MCF 10A (cell line): ENCODE measurements at regions of chr19 and their contacts with region 1.

Region 1: GRCh38 chr19:47663841-47664771 is 49.1 kb upstream of the EHD2 start:
- DNase-seq: peak; percentile 99
- H3K4me3 Mint-ChIP-seq: peak overlapping the region; percentile 52
- H3K27ac Mint-ChIP-seq: peak overlapping the region; percentile 81
- H3K4me1 Mint-ChIP-seq: peaks cover 49% of the 10 kb centered on the region
- H3K27me3 Mint-ChIP-seq: no peaks in the 10 kb centered on the region
- CTCF ChIP-seq: no peak

Region 2: GRCh38 chr19:47483800-47484690 is 180.1 kb before region 1 on chr19 and contains the start of gene KPTN:
- CTCF ChIA-PET with region 1: interaction called, 3 read pairs
- POLR2A ChIA-PET with region 1: interaction called, 10 read pairs
- intact Hi-C with region 1: no loop called
- DNase-seq: peak; percentile 87
- H3K4me3 Mint-ChIP-seq: peak within 1 kb of the TSS; percentile 99
- H3K27ac Mint-ChIP-seq: peak within 1 kb of the TSS; percentile 99
- H3K4me1 Mint-ChIP-seq: peaks cover 5% of the 10 kb centered on the region
- H3K27me3 Mint-ChIP-seq: no peaks in the 10 kb centered on the region
- CTCF ChIP-seq: peak; percentile 99
- total RNA-seq, gene KPTN: 9.7 and 17.6 TPM in 2 replicates

Region 3: GRCh38 chr19:47514869-47515588 is 149.1 kb before region 1 on chr19 and contains the start of gene NAPA:
- CTCF ChIA-PET with region 1: interaction called, 11 read pairs
- POLR2A ChIA-PET with region 1: interaction called, 46 read pairs
- intact Hi-C with region 1: loop called (anchors 10 kb)
- DNase-seq: peak; percentile 100
- H3K4me3 Mint-ChIP-seq: peak within 1 kb of the TSS; percentile 99
- H3K27ac Mint-ChIP-seq: peak within 1 kb of the TSS; percentile 100
- H3K4me1 Mint-ChIP-seq: peaks cover 39% of the 10 kb centered on the region
- H3K27me3 Mint-ChIP-seq: no peaks in the 10 kb centered on the region
- CTCF ChIP-seq: no peak
- total RNA-seq, gene NAPA: 72.1 and 73.2 TPM in 2 replicates

Region 4: GRCh38 chr19:47608074-47608918 is 55.8 kb before region 1 on chr19:
- CTCF ChIA-PET with region 1: interaction called, 18 read pairs
- POLR2A ChIA-PET with region 1: interaction called, 54 read pairs
- intact Hi-C with region 1: loop called (anchors 1 kb)
- DNase-seq: peak; percentile 96
- H3K4me3 Mint-ChIP-seq: peak overlapping the region; percentile 84
- H3K27ac Mint-ChIP-seq: peak overlapping the region; percentile 75
- H3K4me1 Mint-ChIP-seq: peaks cover 15% of the 10 kb centered on the region
- H3K27me3 Mint-ChIP-seq: no peaks in the 10 kb centered on the region
- CTCF ChIP-seq: no peak

Region 5: DNA sequence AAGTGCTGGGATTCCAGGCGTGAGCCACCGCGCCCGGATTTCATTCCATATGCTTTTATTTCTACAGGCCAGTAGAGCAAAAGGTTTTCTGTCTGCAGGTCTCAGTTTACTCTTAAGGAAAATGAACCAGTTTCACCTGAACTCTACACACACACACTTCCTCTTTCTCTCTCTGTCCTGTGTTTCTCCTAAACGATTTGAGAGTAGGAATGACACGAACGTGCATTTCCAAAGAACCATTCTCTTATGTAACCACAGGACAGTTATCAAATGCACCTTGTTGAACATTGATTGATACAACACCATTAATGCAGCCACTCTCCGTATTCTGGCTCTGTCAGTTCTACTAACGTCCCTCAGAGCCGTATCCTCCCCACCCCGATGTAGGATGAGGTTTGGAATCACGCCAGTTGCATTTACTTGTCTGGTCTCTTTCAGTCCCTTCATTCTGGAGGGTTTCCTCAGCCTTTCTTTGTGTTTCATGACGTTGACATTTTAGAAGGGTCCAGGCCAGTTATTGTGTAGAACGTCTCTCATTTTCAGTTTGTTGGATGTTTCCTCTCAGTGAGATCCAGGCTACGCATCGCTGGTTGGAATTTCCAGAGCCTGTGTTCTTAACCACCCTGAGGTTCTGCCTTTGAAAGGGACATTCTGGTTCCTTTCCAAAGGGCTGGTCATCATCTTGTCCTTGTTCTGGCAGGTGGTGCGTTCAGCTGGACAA is 19.2 kb before region 1 on chr19:
- CTCF ChIA-PET with region 1: no interaction called
- POLR2A ChIA-PET with region 1: interaction called, 15 read pairs
- intact Hi-C with region 1: no loop called
- DNase-seq: no peak
- H3K4me3 Mint-ChIP-seq: no peak overlapping the region
- H3K27ac Mint-ChIP-seq: peak overlapping the region; percentile 24
- H3K4me1 Mint-ChIP-seq: peaks cover 27% of the 10 kb centered on the region
- H3K27me3 Mint-ChIP-seq: no peaks in the 10 kb centered on the region
- CTCF ChIP-seq: no peak